IMR-90 (cell line): ENCODE measurements at regions of chr16 and their contacts with region 1.

Region 1: GRCh38 chr16:86396897-86397296 is 113.4 kb upstream of the FOXF1 start:
- DNase-seq: peak; percentile 95
- ATAC-seq: peak; percentile 82
- H3K4me3 ChIP-seq: peak overlapping the region; percentile 10; the same call in 1 of the 2 replicates
- H3K27ac ChIP-seq: peak overlapping the region; percentile 93
- H3K4me1 ChIP-seq: peaks cover 28% of the 10 kb centered on the region
- H3K27me3 ChIP-seq: no peaks in the 10 kb centered on the region
- CTCF ChIP-seq: no peak
- POLR2A ChIP-seq: peak; percentile 61; the same call in 1 of the 2 replicates
- RAD21 ChIP-seq: peak; percentile 4

Region 2: DNA sequence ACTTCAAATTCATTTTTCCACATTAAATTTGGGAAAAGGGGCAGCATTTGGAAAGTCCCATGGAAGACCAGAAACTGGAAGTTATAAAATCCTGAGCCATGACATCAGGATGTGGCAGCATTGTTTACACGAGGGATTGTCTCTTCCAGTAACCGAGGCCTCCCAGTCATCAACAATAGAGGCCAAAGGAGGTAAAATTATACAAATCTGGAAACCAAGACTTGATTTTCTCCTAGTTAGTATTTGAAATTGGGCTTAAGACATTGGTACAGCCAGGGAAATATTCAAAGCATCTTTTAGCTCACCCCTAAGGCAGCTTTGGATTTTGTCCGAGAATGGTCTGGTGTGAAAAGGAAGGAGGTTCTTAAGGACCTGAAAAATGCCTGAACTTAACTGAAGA is 138.2 kb before region 1 on chr16:
- CTCF ChIA-PET with region 1: no interaction called
- POLR2A ChIA-PET with region 1: interaction called, 3 read pairs
- dilution Hi-C with region 1: no loop called
- in situ Hi-C with region 1: no loop called
- intact Hi-C with region 1: loop called (anchors 5 kb)
- DNase-seq: peak; percentile 89
- ATAC-seq: peak; percentile 84
- H3K4me3 ChIP-seq: no peak overlapping the region
- H3K27ac ChIP-seq: peak overlapping the region; percentile 99
- H3K4me1 ChIP-seq: peaks cover 23% of the 10 kb centered on the region
- H3K27me3 ChIP-seq: no peaks in the 10 kb centered on the region
- CTCF ChIP-seq: no peak
- POLR2A ChIP-seq: no peak
- RAD21 ChIP-seq: no peak

Region 3: DNA sequence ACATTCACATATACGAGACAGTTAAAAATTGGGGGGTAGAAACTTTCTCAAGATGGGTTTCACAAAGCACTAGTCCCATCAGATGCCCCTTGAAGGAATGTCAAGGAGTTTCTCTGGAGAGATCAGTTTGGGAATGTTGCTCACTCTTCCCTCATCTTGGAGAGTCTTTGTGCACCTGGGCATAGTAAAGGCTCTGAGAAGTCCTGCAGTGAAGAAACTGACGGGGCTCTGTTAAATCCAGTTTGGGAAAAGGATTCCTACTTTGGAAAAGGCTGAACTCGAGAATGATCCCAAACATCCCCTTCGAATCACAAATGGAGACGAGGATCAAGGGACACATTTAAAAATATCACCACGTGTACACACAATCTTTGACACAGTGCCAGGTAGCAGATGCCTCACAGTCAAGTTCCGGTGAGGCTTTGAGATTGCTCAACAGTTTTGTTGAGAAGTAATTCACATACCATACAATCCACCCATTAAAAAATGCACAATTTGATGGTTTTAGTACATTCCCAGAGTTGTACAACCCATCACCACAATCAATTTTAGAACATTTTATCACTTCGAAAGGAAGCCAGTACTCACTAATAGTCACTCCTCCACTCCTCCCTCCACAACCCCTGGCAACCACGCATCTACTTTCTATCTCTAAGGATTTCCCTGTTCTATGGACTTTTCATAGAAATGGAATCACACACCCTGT is 89.9 kb before region 1 on chr16:
- CTCF ChIA-PET with region 1: interaction called, 3 read pairs
- POLR2A ChIA-PET with region 1: no interaction called
- dilution Hi-C with region 1: no loop called
- in situ Hi-C with region 1: loop called (anchors 5 kb)
- intact Hi-C with region 1: loop called (anchors 2 kb)
- DNase-seq: peak; percentile 90
- ATAC-seq: peak; percentile 13
- H3K4me3 ChIP-seq: no peak overlapping the region
- H3K27ac ChIP-seq: peak overlapping the region; percentile 67
- H3K4me1 ChIP-seq: peaks cover 38% of the 10 kb centered on the region
- H3K27me3 ChIP-seq: no peaks in the 10 kb centered on the region
- CTCF ChIP-seq: no peak
- POLR2A ChIP-seq: no peak
- RAD21 ChIP-seq: no peak

Region 4: GRCh38 chr16:86343027-86343787 is 53.7 kb before region 1 on chr16:
- CTCF ChIA-PET with region 1: no interaction called
- POLR2A ChIA-PET with region 1: no interaction called
- dilution Hi-C with region 1: no loop called
- in situ Hi-C with region 1: no loop called
- intact Hi-C with region 1: loop called (anchors 2 kb)
- DNase-seq: peak; percentile 89
- ATAC-seq: peak; percentile 92
- H3K4me3 ChIP-seq: no peak overlapping the region
- H3K27ac ChIP-seq: peak overlapping the region; percentile 96
- H3K4me1 ChIP-seq: peaks cover 21% of the 10 kb centered on the region
- H3K27me3 ChIP-seq: no peaks in the 10 kb centered on the region
- CTCF ChIP-seq: no peak
- POLR2A ChIP-seq: peak; percentile 39; the same call in 1 of the 2 replicates
- RAD21 ChIP-seq: no peak

Region 5: GRCh38 chr16:86457501-86458148 is 60.7 kb after region 1 on chr16:
- CTCF ChIA-PET with region 1: no interaction called
- POLR2A ChIA-PET with region 1: no interaction called
- dilution Hi-C with region 1: no loop called
- in situ Hi-C with region 1: loop called (anchors 5 kb)
- intact Hi-C with region 1: loop called (anchors 2 kb)
- DNase-seq: peak; percentile 99
- ATAC-seq: peak; percentile 61
- H3K4me3 ChIP-seq: no peak overlapping the region
- H3K27ac ChIP-seq: peak overlapping the region; percentile 97
- H3K4me1 ChIP-seq: peaks cover 28% of the 10 kb centered on the region
- H3K27me3 ChIP-seq: no peaks in the 10 kb centered on the region
- CTCF ChIP-seq: no peak
- POLR2A ChIP-seq: peak; percentile 72
- RAD21 ChIP-seq: no peak; the same call in 1 of the 2 replicates